ENCODE measurements at regions of chr14 and their contacts with region 1.

Region 1: GRCh38 chr14:92951912-92952471 is 29.0 kb downstream of the CHGA start:
- DNase-seq: peak; percentile 84
- H3K4me3 Mint-ChIP-seq: no peak overlapping the region
- H3K27ac Mint-ChIP-seq: no peak overlapping the region
- H3K4me1 Mint-ChIP-seq: peaks cover 4% of the 10 kb centered on the region
- H3K27me3 Mint-ChIP-seq: no peaks in the 10 kb centered on the region

Region 2: DNA sequence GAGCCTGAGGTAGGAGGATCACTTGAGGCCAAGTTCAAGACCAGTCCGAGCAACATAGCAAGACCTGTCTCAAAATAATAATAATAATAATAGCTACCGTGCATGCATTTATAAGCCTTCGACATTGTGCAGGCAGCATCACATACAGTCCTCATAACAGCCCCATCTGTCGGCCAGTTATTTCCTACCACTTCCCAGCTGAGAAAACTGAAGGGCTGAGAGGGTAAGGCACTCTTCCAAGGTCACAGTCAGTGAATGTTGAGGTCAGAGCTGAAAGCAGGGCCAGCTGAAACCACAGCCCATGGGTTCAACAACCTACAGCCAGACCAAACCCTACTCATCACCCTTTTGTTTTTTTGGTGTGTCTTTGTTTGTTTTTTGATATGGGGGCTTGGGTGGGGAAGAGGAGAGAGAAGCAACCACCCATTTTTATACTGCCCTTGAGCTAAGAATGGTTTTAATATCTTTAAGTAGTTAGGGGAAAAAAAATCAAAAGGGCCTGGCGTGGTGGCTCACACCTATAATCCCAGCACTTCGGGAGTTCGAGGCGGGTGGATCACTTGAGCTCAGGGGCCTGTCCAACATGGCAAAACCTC is 180.6 kb after region 1 on chr14:
- CTCF ChIA-PET with region 1: interaction called, 11 read pairs
- intact Hi-C with region 1: no loop called
- DNase-seq: peak; percentile 26
- H3K4me3 Mint-ChIP-seq: no peak overlapping the region
- H3K27ac Mint-ChIP-seq: no peak overlapping the region
- H3K4me1 Mint-ChIP-seq: no peaks in the 10 kb centered on the region
- H3K27me3 Mint-ChIP-seq: no peaks in the 10 kb centered on the region

Region 3: GRCh38 chr14:93137864-93138263 is 185.9 kb after region 1 on chr14:
- CTCF ChIA-PET with region 1: interaction called, 11 read pairs
- intact Hi-C with region 1: loop called (anchors 1 kb)
- DNase-seq: no peak
- H3K4me3 Mint-ChIP-seq: no peak overlapping the region
- H3K27ac Mint-ChIP-seq: no peak overlapping the region
- H3K4me1 Mint-ChIP-seq: peaks cover 2% of the 10 kb centered on the region
- H3K27me3 Mint-ChIP-seq: no peaks in the 10 kb centered on the region

Region 4: DNA sequence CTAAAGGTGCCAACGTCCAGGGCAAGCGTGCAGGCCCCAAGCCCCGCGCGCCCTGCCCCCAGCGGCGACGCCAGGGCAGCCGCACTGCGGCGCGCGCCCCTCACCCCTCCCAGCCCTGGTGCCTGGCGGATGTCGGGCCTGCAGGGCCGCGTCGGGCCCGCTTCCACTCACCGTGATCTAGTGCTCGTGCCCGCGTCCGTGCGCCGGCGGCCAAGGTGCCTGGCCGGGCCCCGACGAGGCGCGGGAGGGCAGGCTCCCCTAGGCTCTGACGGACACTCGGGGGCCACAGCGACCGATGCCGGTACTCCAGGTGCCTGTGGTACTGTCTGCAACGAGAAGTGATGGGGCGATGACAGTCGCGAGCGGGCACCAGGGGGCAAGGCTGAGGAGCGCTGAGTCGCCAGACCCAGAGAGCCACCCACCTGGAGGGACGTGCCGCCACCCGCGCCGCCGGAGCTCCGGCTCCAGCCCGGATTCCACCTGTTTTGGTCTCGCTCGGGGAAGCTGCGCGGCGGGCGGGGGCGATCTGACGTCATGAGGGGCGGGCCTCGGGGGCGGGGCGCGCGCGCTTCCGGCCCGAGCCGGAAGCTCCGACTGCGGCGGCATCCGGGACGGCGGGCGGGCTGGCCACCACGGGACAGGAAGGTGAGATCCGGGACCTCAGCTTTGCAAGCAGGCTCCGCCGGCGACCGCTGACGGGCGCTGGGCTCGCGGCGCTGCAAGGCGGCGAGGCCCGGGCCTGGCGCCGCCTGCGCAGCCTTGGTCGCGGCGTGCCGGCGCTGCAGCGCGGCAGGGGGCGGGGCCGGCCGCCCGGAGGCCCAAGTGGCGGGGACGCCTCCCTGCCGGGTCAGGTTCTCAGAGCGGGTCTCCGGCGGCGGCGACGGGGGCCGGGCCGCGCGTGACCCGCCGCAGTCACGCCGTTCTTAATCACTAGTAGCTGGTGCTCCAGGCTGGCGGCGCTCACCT is 232.7 kb after region 1 on chr14 and contains the starts of genes LYSET and MOAP1:
- CTCF ChIA-PET with region 1: interaction called, 3 read pairs
- intact Hi-C with region 1: loop called (anchors 2 kb)
- DNase-seq: peak; percentile 91
- H3K4me3 Mint-ChIP-seq: peak within 1 kb of the TSS; percentile 88
- H3K27ac Mint-ChIP-seq: peak within 1 kb of the TSS; percentile 91
- H3K4me1 Mint-ChIP-seq: peaks cover 42% of the 10 kb centered on the region
- H3K27me3 Mint-ChIP-seq: no peaks in the 10 kb centered on the region
- total RNA-seq, gene LYSET: 11.4 to 11.6 TPM
- total RNA-seq, gene MOAP1: 11.9 to 13.1 TPM

Region 5: GRCh38 chr14:93219103-93219726 is 267.2 kb after region 1 on chr14:
- CTCF ChIA-PET with region 1: no interaction called
- intact Hi-C with region 1: loop called (anchors 1 kb)
- DNase-seq: peak; percentile 58
- H3K4me3 Mint-ChIP-seq: no peak overlapping the region
- H3K27ac Mint-ChIP-seq: no peak overlapping the region
- H3K4me1 Mint-ChIP-seq: no peaks in the 10 kb centered on the region
- H3K27me3 Mint-ChIP-seq: no peaks in the 10 kb centered on the region

Region 6: DNA sequence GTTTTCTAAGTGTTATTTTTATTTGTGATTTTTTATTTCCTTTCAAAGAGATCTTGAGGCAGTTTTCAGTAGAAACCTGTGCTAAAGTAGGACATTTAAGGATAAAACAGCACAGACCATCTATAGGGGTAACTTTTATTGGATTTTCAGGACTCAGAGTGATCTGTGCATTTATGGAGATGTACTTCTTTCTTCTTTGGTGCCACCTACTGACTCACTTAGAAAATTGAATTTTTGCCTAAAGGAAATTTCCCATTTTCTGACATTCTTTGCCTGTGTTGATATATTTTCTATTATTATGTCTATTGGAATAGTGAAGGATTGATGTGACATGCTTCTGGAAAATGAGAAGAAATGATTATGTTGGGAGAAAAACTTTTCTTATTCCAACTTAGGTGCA is 591.8 kb after region 1 on chr14:
- CTCF ChIA-PET with region 1: no interaction called
- intact Hi-C with region 1: loop called (anchors 10 kb)
- DNase-seq: no peak
- H3K4me3 Mint-ChIP-seq: no peak overlapping the region
- H3K27ac Mint-ChIP-seq: no peak overlapping the region
- H3K4me1 Mint-ChIP-seq: no peaks in the 10 kb centered on the region
- H3K27me3 Mint-ChIP-seq: peaks cover 15% of the 10 kb centered on the region